HEK293 (cell line): ENCODE measurements at regions of chr7 and their contacts with region 1.

Region 1: GRCh38 chr7:131633342-131633843 is 77.0 kb upstream of the PODXL start:
- H3K4me3 ChIP-seq: no peak overlapping the region
- H3K27ac ChIP-seq: no peak overlapping the region
- H3K4me1 ChIP-seq: no peaks in the 10 kb centered on the region
- CTCF ChIP-seq: no peak

Region 2: DNA sequence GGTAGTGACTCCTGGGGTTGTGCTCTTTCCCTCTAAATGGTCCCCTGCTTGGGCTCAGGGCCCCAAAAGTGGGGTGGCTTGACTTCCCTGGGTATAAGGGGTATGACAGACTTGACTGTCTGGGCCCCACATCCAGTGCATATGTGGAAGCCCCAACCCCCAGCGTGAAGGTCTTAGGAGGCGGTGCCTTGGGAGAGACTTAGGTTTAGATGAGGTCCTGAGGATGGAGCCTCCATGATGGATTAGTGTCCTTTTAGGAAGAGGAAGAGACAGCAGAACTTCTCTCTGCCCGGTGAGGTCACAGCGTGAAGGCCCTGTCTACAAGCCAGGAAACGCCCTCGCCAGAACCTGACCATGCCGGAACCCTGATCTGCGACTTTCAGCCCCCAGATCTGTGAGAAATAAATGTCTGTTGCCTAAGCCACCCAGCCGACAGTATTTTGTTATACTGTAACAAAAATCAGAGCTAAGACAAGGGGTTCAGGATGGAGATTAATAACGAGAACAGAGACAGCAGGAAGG is 100.8 kb before region 1 on chr7:
- CTCF ChIA-PET with region 1: no interaction called
- POLR2A ChIA-PET with region 1: interaction called, 10 read pairs
- H3K4me3 ChIP-seq: no peak overlapping the region
- H3K27ac ChIP-seq: no peak overlapping the region
- H3K4me1 ChIP-seq: no peaks in the 10 kb centered on the region
- CTCF ChIP-seq: no peak

Region 3: GRCh38 chr7:131654668-131655326 is 21.4 kb after region 1 on chr7:
- CTCF ChIA-PET with region 1: no interaction called
- POLR2A ChIA-PET with region 1: no interaction called
- H3K4me3 ChIP-seq: no peak overlapping the region
- H3K27ac ChIP-seq: no peak overlapping the region
- H3K4me1 ChIP-seq: no peaks in the 10 kb centered on the region
- CTCF ChIP-seq: peak; percentile 91